ENCODE measurements at regions of chr20 and their contacts with region 1.

Region 1: GRCh38 chr20:9407805-9408421 is 106.5 kb upstream of the LAMP5 start:
- DNase-seq: peak; percentile 26 to 79
- H3K4me3 ChIP-seq: no peak overlapping the region
- H3K4me1 ChIP-seq: no peaks in the 10 kb centered on the region; the same call in 1 of the 2 replicates
- H3K27me3 ChIP-seq: no peaks in the 10 kb centered on the region

Region 2: DNA sequence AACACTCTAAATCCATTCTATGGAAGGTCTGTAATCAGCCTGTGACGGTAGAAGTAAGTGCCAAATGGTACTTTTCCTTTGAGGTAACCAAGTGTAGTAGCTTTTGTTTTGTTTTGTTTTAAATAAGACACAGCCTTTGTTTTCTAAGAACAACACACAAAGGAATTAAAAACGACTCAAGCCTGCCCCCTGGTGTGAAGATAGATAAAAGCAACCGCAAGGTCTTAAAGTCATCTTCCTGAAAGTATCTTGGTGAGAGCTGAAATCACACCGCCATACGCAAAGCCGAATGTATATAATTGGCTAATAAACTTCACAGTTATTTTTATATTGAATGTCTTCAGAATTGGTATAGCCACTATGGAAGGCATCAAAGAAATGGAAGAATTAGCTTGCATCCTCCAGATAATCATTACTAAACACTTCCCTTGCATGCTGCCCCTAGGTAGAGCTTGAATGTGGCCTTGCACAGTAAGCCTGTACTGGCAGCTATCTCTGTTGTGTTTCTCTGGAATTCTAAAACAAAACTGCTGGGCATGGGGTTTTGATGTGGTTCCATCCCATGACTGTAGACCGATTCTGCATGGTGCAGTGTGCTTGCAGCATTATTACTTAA is 202.1 kb after region 1 on chr20:
- in situ Hi-C with region 1: loop called (anchors 5 kb)
- DNase-seq: peak; percentile 57 to 84
- H3K4me3 ChIP-seq: no peak overlapping the region
- H3K4me1 ChIP-seq: no peaks in the 10 kb centered on the region
- H3K27me3 ChIP-seq: no peaks in the 10 kb centered on the region

Region 3: GRCh38 chr20:9912858-9913434 is 505.0 kb after region 1 on chr20:
- in situ Hi-C with region 1: loop called (anchors 25 kb)
- DNase-seq: peak; percentile 40 to 64
- H3K4me3 ChIP-seq: no peak overlapping the region
- H3K4me1 ChIP-seq: no peaks in the 10 kb centered on the region
- H3K27me3 ChIP-seq: no peaks in the 10 kb centered on the region

Measured in HAP-1 (cell line).